ENCODE measurements at regions of chr17 and their contacts with region 1.

Region 1: DNA sequence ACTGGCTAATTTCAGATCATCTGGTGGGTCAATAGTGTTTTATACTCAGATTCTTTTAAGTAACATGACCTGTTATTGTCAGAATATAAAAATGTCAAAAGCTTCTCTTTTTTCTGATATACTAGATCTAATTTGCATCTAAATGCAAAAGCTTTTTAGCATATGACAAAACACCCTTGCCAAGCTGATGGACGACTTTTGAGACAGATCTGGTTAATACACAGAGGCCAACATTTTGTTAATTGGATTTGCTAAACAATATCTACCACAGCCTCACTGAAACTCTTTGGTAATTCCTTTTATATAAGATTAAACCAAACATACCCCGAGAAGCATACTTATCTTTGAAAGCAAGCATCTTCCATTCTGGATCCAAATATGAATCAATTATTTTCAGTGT is 10.3 kb upstream of the NOL11 start:
- DNase-seq: no peak
- H3K4me3 ChIP-seq: no peak overlapping the region
- H3K27ac ChIP-seq: no peak overlapping the region
- H3K4me1 ChIP-seq: no peaks in the 10 kb centered on the region
- H3K27me3 ChIP-seq: no peaks in the 10 kb centered on the region
- CTCF ChIP-seq: no peak
- EP300 ChIP-seq: no peak
- POLR2A ChIP-seq: no peak
- RAD21 ChIP-seq: no peak

Region 2: DNA sequence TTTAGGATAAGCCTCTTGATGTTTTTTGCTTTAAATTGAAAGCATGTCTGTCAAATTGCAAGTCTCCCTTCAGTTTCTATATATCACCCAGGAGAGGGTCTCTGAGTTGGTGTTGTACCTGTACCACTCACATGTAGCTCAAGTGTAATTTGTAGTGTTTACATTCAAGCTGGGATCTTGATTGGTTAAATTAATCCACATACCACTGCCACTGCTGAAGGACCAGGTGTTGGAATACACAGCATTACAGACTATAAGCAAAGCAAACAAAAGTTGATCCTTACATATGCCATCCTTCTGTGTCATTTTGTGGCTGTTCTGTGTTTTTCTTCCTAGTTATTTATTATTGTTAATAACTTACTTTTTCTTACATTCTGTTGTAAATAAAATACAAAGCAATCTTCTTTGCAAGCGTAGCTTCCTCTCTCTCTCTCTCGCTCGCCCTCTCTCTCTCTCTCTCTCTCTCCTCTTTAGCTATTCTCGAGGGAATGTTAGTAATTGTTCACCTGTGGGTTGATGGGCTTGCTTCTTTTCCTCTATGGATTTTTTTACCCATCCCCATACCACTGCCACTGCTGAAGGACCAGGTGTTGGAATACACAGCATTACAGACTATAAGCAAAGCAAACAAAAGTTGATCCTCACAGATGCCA is 10.5 kb before region 1 on chr17:
- CTCF ChIA-PET with region 1: interaction called, 29 read pairs
- POLR2A ChIA-PET with region 1: no interaction called
- DNase-seq: no peak
- H3K4me3 ChIP-seq: no peak overlapping the region
- H3K27ac ChIP-seq: no peak overlapping the region
- H3K4me1 ChIP-seq: no peaks in the 10 kb centered on the region; a peak in 1 of 7 replicates
- H3K27me3 ChIP-seq: no peaks in the 10 kb centered on the region
- CTCF ChIP-seq: no peak
- EP300 ChIP-seq: no peak
- POLR2A ChIP-seq: no peak
- RAD21 ChIP-seq: no peak

Region 3: GRCh38 chr17:67717624-67718329 is 10.3 kb after region 1 on chr17 and contains the start of gene NOL11:
- CTCF ChIA-PET with region 1: interaction called, 22 read pairs
- POLR2A ChIA-PET with region 1: interaction called, 16 read pairs
- DNase-seq: peak; percentile 99 to 100
- H3K4me3 ChIP-seq: peak within 1 kb of the TSS; percentile 75 to 100 (median 90)
- H3K27ac ChIP-seq: peak within 1 kb of the TSS; percentile 95
- H3K4me1 ChIP-seq: peaks cover 0 to 3% (median under 1%) of the 10 kb centered on the region in 4 experiments; a peak in 1 of 7 replicates
- H3K27me3 ChIP-seq: no peaks in the 10 kb centered on the region
- CTCF ChIP-seq: peak; percentile 85 to 99 (median 94)
- EP300 ChIP-seq: no peak
- POLR2A ChIP-seq: peak; percentile 71 to 96
- RAD21 ChIP-seq: peak; percentile 67 to 74
- total RNA-seq, gene NOL11: 97.2 and 102 TPM in 2 replicates

Measured in H1 (cell line).